GM12878 (cell line): ENCODE measurements at regions of chr9 and their contacts with region 1.

Region 1: GRCh38 chr9:136790927-136791641 is at the start of gene TMEM141:
- DNase-seq: peak; percentile 92
- ATAC-seq: peak; percentile 94
- H3K4me3 ChIP-seq: peak within 1 kb of the TSS; percentile 77
- H3K27ac ChIP-seq: peak within 1 kb of the TSS; percentile 82
- H3K4me1 ChIP-seq: peaks cover 10% of the 10 kb centered on the region
- H3K27me3 ChIP-seq: no peaks in the 10 kb centered on the region
- CTCF ChIP-seq: no peak
- EP300 ChIP-seq: no peak
- POLR2A ChIP-seq: peak; percentile 83
- RAD21 ChIP-seq: no peak
- polyA plus RNA-seq, gene TMEM141: 7.8 to 13.3 TPM

Region 2: DNA sequence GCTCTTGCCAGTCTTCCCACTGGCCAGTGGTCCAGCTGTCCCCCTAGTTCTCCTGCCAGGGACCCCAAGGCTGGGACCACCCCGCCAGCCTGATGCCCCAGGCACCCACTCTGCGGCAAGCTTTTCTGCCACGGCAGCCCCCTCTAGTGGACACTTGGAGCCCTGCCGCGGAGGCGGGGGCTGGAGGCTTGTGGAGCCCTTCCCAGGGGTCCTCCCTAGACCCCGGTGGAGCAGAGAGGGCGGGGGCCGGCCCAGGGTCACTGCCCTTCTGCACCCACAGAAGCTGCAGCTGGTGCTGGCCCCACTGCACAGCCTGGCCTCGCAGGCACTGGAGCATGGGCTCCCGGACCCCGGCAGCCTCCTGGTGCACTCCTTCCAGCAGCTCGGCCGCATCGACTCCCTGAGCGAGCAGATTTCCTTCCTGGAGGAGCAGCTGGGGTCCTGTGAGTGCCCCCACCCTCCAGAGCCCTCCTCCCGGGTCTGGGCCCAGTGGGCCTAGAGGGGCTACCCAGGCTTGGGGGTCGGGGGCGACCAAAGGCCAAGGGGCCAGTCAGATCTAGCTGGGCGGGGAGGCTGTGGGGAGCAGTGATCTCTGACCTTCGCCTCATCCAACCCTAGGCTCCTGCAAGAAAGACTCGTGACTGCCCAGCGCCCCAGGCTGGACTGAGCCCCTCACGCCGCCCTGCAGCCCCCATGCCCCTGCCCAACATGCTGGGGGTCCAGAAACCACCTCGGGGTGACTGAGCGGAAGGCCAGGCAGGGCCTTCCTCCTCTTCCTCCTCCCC is 119.2 kb before region 1 on chr9:
- CTCF ChIA-PET with region 1: no interaction called
- POLR2A ChIA-PET with region 1: no interaction called
- RAD21 ChIA-PET with region 1: no interaction called
- SMC1A ChIA-PET with region 1: no interaction called
- in situ Hi-C with region 1: no loop called
- intact Hi-C with region 1: no loop called
- DNase-seq: no peak
- ATAC-seq: peak; percentile 77
- H3K4me3 ChIP-seq: no peak overlapping the region
- H3K27ac ChIP-seq: no peak overlapping the region
- H3K4me1 ChIP-seq: no peaks in the 10 kb centered on the region
- H3K27me3 ChIP-seq: peaks cover 0 to 2% of the 10 kb centered on the region in 2 experiments; a peak in 1 of 4 replicates
- CTCF ChIP-seq: peak; percentile 70 to 95 (median 78)
- EP300 ChIP-seq: no peak
- POLR2A ChIP-seq: no peak
- RAD21 ChIP-seq: peak; percentile 44; the same call in 1 of the 2 replicates

Region 3: GRCh38 chr9:136769710-136770191 is 21.3 kb before region 1 on chr9:
- CTCF ChIA-PET with region 1: interaction called, 163 read pairs
- POLR2A ChIA-PET with region 1: no interaction called
- RAD21 ChIA-PET with region 1: interaction called, 6 read pairs
- SMC1A ChIA-PET with region 1: interaction called, 23 read pairs
- in situ Hi-C with region 1: no loop called
- intact Hi-C with region 1: no loop called
- DNase-seq: no peak
- ATAC-seq: peak; percentile 41; the same call in 2 of the 3 replicates
- H3K4me3 ChIP-seq: no peak overlapping the region
- H3K27ac ChIP-seq: no peak overlapping the region
- H3K4me1 ChIP-seq: peaks cover 26% of the 10 kb centered on the region
- H3K27me3 ChIP-seq: no peaks in the 10 kb centered on the region; a peak in 1 of 4 replicates
- CTCF ChIP-seq: peak; percentile 40 to 74 (median 55); a peak in 5 of 6 replicates
- EP300 ChIP-seq: no peak
- POLR2A ChIP-seq: no peak
- RAD21 ChIP-seq: peak; percentile 41

Region 4: DNA sequence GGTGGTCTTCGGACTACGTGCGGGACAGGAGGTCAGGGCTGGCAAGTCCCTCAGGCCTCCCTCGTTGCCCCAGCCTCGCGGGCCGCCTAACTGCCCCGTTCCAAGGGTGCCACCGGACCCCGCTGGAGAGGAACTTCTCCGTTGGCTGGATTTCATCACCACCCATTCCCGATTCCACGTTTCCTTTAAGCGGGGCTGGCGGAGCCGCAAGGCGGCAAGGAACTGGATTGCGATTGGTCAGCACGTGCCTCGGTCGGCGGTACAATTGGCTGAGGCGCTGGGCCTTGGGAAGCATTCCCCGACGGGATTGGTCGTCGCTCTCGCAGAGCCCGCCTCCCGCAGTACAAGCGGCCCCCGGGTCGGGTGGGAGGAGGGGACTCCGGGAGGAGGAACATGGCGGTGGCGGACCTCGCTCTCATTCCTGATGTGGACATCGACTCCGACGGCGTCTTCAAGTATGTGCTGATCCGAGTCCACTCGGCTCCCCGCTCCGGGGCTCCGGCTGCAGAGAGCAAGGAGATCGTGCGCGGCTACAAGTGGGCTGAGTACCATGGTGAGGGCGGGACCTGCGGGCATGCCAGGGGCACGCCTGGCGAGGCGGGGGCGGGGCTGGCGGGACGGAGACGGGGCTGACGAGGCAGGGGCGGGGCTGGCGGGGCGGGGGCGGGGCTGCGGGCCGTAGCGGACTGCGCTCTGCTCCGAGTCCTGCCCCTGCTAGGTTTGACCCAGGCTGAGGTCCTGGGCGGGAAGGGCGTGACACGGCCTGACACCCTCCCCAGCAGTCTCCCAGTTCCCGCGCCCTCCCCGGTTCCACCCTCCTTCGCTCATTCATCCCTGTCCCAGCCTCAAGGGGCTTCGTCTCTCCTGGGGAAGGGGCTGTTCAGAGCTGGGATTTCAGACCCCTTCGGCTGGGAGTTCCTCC is 58.2 kb after region 1 on chr9 and contains the start of gene PHPT1:
- CTCF ChIA-PET with region 1: interaction called, 3 read pairs
- POLR2A ChIA-PET with region 1: no interaction called
- RAD21 ChIA-PET with region 1: no interaction called
- SMC1A ChIA-PET with region 1: no interaction called
- in situ Hi-C with region 1: no loop called
- intact Hi-C with region 1: loop called (anchors 2 kb)
- DNase-seq: peak; percentile 92
- ATAC-seq: peak; percentile 91
- H3K4me3 ChIP-seq: peak within 1 kb of the TSS; percentile 80
- H3K27ac ChIP-seq: peak within 1 kb of the TSS; percentile 81
- H3K4me1 ChIP-seq: peaks cover 7% of the 10 kb centered on the region
- H3K27me3 ChIP-seq: no peaks in the 10 kb centered on the region; a peak in 1 of 4 replicates
- CTCF ChIP-seq: no peak
- EP300 ChIP-seq: no peak
- POLR2A ChIP-seq: peak; percentile 92
- RAD21 ChIP-seq: no peak
- polyA plus RNA-seq, gene PHPT1: 169 to 200 TPM

Region 5: GRCh38 chr9:136949817-136950655 is 159.0 kb after region 1 on chr9:
- CTCF ChIA-PET with region 1: interaction called, 11 read pairs
- POLR2A ChIA-PET with region 1: no interaction called
- RAD21 ChIA-PET with region 1: interaction called, 3 read pairs
- SMC1A ChIA-PET with region 1: interaction called, 5 read pairs
- in situ Hi-C with region 1: no loop called
- intact Hi-C with region 1: loop called (anchors 10 kb)
- DNase-seq: peak; percentile 73
- ATAC-seq: peak; percentile 98
- H3K4me3 ChIP-seq: peak overlapping the region; percentile 77
- H3K27ac ChIP-seq: peak overlapping the region; percentile 53
- H3K4me1 ChIP-seq: peaks cover 7% of the 10 kb centered on the region
- H3K27me3 ChIP-seq: no peaks in the 10 kb centered on the region
- CTCF ChIP-seq: peak in 2 of 3 experiments; percentile 22 to 37; a peak in 2 of 6 replicates
- EP300 ChIP-seq: no peak
- POLR2A ChIP-seq: no peak
- RAD21 ChIP-seq: no peak

Region 6: GRCh38 chr9:137018761-137019559 is 227.9 kb after region 1 on chr9:
- CTCF ChIA-PET with region 1: no interaction called
- POLR2A ChIA-PET with region 1: no interaction called
- RAD21 ChIA-PET with region 1: no interaction called
- SMC1A ChIA-PET with region 1: no interaction called
- in situ Hi-C with region 1: no loop called
- intact Hi-C with region 1: no loop called
- DNase-seq: no peak
- ATAC-seq: no peak
- H3K4me3 ChIP-seq: no peak overlapping the region
- H3K27ac ChIP-seq: no peak overlapping the region
- H3K4me1 ChIP-seq: no peaks in the 10 kb centered on the region
- H3K27me3 ChIP-seq: no peaks in the 10 kb centered on the region
- CTCF ChIP-seq: no peak
- EP300 ChIP-seq: no peak
- POLR2A ChIP-seq: no peak
- RAD21 ChIP-seq: no peak

Region 7: GRCh38 chr9:137064027-137064879 is 273.2 kb after region 1 on chr9:
- CTCF ChIA-PET with region 1: interaction called, 30 read pairs
- POLR2A ChIA-PET with region 1: no interaction called
- RAD21 ChIA-PET with region 1: no interaction called
- SMC1A ChIA-PET with region 1: no interaction called
- in situ Hi-C with region 1: no loop called
- intact Hi-C with region 1: loop called (anchors 1 kb)
- DNase-seq: no peak
- ATAC-seq: peak; percentile 49
- H3K4me3 ChIP-seq: no peak overlapping the region
- H3K27ac ChIP-seq: no peak overlapping the region
- H3K4me1 ChIP-seq: peaks cover 15% of the 10 kb centered on the region
- H3K27me3 ChIP-seq: no peaks in the 10 kb centered on the region
- CTCF ChIP-seq: peak; percentile 78 to 96 (median 85)
- EP300 ChIP-seq: no peak
- POLR2A ChIP-seq: no peak
- RAD21 ChIP-seq: peak; percentile 61